Breast epithelium (tissue), 4 donors: ENCODE measurements at regions of chr1 and their contacts with region 1.

Region 1: DNA sequence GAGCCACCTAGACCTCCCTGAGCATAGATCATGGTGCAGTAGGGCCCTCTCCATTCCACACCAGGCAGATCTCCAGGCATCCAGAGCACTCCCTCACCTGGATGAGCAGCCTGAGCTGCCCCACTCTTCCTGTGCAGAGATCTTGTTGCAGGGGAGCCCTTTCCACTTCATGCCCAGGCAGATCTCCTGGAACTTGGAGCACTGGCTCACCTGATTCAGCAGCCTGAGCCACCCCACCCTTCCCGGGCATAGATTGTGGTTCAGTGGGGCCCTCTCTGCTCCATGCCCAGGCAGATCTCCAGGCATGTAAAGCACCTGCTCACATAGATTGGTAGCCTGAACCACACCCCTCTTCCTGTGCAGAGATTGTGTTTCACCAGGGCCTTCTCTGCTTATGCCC is 78.0 kb downstream of the SEC16B start:
- DNase-seq: no peak
- H3K4me3 ChIP-seq: no peak overlapping the region
- H3K27ac ChIP-seq: no peak overlapping the region
- H3K4me1 ChIP-seq: no peaks in the 10 kb centered on the region
- H3K27me3 ChIP-seq: no peaks in the 10 kb centered on the region
- CTCF ChIP-seq: no peak
- POLR2A ChIP-seq: no peak

Region 2: DNA sequence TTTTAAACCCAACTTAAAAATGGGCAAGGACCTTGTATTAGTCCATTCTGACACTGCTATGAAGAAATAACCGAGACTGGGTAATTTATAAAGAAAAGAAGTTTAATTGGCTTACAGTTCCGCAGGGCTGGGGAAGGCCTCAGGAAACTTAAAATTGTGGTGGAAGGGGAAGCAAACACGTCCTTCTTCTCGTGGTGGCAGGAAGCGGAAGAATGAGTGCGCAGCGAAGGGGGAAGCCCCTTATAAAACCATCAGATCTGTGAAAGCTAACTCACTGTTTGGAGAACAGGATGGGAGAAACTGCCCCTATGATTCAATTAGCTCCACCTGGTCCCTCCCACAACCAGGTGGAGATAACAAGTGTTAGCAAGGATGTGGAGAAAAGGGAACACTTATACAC is 159.6 kb before region 1 on chr1:
- intact Hi-C with region 1: no loop called
- DNase-seq: no peak
- H3K4me3 ChIP-seq: no peak overlapping the region
- H3K27ac ChIP-seq: no peak overlapping the region
- H3K4me1 ChIP-seq: no peaks in the 10 kb centered on the region
- H3K27me3 ChIP-seq: no peaks in the 10 kb centered on the region
- CTCF ChIP-seq: no peak
- POLR2A ChIP-seq: no peak

Region 3: DNA sequence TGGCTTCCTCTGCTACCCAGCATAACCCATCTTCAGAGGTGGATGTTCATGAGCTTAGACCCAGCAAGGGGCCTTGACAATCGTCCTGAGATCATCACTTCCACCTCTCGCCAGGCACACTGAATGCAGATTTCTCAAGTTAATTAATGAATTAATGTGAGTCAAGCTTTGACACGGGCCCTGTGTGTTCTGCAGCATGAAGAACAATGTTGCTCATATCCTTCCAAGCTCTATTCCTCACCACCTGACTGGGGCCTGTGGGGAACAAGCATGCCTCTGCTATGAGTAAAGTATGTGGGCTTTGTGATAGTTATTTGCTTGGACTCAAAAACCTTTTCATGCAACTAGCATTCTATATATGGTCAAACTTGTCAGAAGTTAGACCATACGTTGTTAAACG is 44.0 kb before region 1 on chr1:
- intact Hi-C with region 1: no loop called
- DNase-seq: no peak
- H3K4me3 ChIP-seq: no peak overlapping the region
- H3K27ac ChIP-seq: no peak overlapping the region
- H3K4me1 ChIP-seq: no peaks in the 10 kb centered on the region
- H3K27me3 ChIP-seq: no peaks in the 10 kb centered on the region
- CTCF ChIP-seq: no peak
- POLR2A ChIP-seq: no peak

Region 4: DNA sequence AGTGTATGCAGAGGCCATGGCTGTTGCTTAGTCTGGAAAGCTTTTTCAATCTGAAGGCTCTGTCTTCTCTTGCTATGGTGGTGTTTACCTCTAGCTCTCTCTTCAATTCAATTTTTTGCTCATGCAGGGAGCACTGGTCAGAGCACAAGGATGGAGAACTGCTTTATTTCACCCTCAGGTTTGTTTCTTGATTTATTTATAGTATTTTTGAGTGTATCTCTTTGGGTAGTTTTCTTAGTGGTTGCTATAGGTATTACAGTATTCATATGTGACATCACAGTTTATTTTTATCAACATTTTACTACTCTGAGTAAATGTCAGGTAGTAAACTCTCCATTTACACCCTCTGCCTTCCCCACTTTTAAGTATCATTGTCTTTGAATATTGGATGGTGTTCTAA is 350.0 kb after region 1 on chr1:
- intact Hi-C with region 1: loop called (anchors 5 kb)
- DNase-seq: no peak
- H3K4me3 ChIP-seq: no peak overlapping the region
- H3K27ac ChIP-seq: no peak overlapping the region
- H3K4me1 ChIP-seq: no peaks in the 10 kb centered on the region
- H3K27me3 ChIP-seq: no peaks in the 10 kb centered on the region
- CTCF ChIP-seq: no peak
- POLR2A ChIP-seq: no peak